CD8-positive, alpha-beta T cell (primary cell): ENCODE measurements at regions of chr17 and their contacts with region 1.

Region 1: DNA sequence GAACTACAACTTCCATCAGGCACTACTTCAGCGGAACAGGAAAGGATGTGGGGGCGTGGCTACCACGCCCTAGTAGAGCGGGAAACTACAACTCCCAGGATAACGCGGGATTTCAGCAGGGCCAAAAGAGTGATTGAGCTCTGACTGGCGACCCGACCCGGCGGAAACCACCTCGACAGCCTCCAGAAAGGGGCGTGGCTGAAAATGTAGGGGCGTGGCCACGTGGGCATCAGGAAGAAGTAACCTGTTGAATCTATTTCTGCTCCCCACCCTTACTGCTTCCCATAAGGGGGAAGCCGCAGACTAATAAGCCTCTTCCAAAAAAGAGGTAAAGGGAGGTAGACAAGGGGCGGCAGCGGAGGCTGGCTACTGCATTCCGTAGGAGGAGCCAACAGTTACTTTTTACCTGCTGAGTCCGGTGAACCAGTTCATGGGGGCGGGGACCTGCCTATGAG is at the start of gene TMEM102:
- DNase-seq: peak; percentile 96 to 99 (median 98)
- ATAC-seq: peak; percentile 81
- H3K4me3 ChIP-seq: peak within 1 kb of the TSS; percentile 70 to 82
- H3K4me3 Mint-ChIP-seq: peak within 1 kb of the TSS; percentile 92
- H3K27ac ChIP-seq: peak within 1 kb of the TSS; percentile 66 to 90
- H3K27ac Mint-ChIP-seq: peak within 1 kb of the TSS; percentile 95
- H3K4me1 ChIP-seq: peaks cover 38% of the 10 kb centered on the region
- H3K4me1 Mint-ChIP-seq: peaks cover 38% of the 10 kb centered on the region
- H3K27me3 ChIP-seq: peaks cover 0 to 4% of the 10 kb centered on the region in 2 experiments
- H3K27me3 Mint-ChIP-seq: peaks cover 12% of the 10 kb centered on the region
- CTCF ChIP-seq: no peak
- total RNA-seq, gene TMEM102: 13.2 to 15.3 TPM

Region 2: GRCh38 chr17:7252176-7253043 is 182.8 kb before region 1 on chr17 and contains the start of gene ELP5:
- CTCF ChIA-PET with region 1: no interaction called
- POLR2A ChIA-PET with region 1: no interaction called
- intact Hi-C with region 1: loop called in 1 of 2 experiments (anchors 1 kb)
- DNase-seq: peak; percentile 73 to 99 (median 87)
- ATAC-seq: peak; percentile 48
- H3K4me3 ChIP-seq: peak within 1 kb of the TSS; percentile 81 to 92
- H3K4me3 Mint-ChIP-seq: peak within 1 kb of the TSS; percentile 97
- H3K27ac ChIP-seq: peak within 1 kb of the TSS; percentile 99
- H3K27ac Mint-ChIP-seq: peak within 1 kb of the TSS; percentile 100
- H3K4me1 ChIP-seq: peaks cover 31% of the 10 kb centered on the region
- H3K4me1 Mint-ChIP-seq: peaks cover 44% of the 10 kb centered on the region
- H3K27me3 ChIP-seq: no peaks in the 10 kb centered on the region
- H3K27me3 Mint-ChIP-seq: no peaks in the 10 kb centered on the region
- CTCF ChIP-seq: no peak
- total RNA-seq, gene ELP5: 38.9 to 39.0 TPM

Region 3: GRCh38 chr17:7336240-7337175 is 98.7 kb before region 1 on chr17 and contains the start of gene ACAP1:
- CTCF ChIA-PET with region 1: interaction called, 18 read pairs
- POLR2A ChIA-PET with region 1: interaction called, 10 read pairs
- intact Hi-C with region 1: no loop called
- DNase-seq: peak; percentile 72 to 93 (median 89)
- ATAC-seq: peak; percentile 98
- H3K4me3 ChIP-seq: peak within 1 kb of the TSS; percentile 74 to 76
- H3K4me3 Mint-ChIP-seq: peak within 1 kb of the TSS; percentile 94
- H3K27ac ChIP-seq: peak within 1 kb of the TSS; percentile 60 to 65
- H3K27ac Mint-ChIP-seq: peak within 1 kb of the TSS; percentile 97
- H3K4me1 ChIP-seq: peaks cover 55% of the 10 kb centered on the region
- H3K4me1 Mint-ChIP-seq: peaks cover 61% of the 10 kb centered on the region
- H3K27me3 ChIP-seq: no peaks in the 10 kb centered on the region
- H3K27me3 Mint-ChIP-seq: no peaks in the 10 kb centered on the region
- CTCF ChIP-seq: no peak
- total RNA-seq, gene ACAP1: 432 to 451 TPM

Region 4: DNA sequence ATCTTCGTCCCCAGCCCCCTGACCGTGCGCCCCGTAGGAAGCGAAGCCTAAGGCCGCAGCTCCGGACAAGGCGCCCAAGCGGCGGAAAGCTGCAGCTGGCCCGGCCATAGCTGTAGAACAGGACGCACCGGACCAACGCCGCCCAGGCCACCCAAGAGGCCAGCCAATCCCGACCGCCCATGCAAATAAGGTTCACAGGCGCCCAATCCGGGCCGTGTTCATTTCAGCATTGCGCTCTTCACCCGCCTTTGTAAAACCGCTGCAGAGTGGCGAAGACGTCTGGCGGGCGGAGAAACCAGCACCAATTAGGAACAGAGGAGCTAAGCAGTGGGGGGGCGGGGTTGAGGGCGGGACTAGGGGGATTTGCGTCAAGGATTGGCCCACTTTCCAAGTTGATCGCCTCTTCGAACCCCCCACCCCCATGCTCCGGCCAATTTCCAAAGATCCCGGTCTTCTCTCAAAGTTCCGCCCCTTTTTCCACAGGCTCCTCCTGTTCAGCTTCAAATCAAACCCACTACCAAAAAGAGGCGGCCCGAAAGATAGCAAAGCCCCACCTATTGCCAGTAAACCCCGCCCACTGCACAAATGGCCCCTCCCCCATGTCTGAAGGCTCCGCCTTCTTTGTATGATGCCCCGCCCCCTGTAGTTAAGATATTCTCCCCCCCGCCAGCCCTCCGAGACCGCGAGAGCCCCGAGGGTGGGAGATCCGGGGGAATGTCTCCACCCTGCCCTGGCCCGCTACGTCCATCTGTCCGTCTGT is 31.1 kb before region 1 on chr17 and contains the start of gene TMEM256:
- CTCF ChIA-PET with region 1: interaction called, 24 read pairs
- POLR2A ChIA-PET with region 1: interaction called, 20 read pairs
- intact Hi-C with region 1: loop called (anchors 1 kb)
- DNase-seq: peak; percentile 90 to 99 (median 94)
- ATAC-seq: peak; percentile 83
- H3K4me3 ChIP-seq: peak within 1 kb of the TSS; percentile 75 to 83
- H3K4me3 Mint-ChIP-seq: peak within 1 kb of the TSS; percentile 95
- H3K27ac ChIP-seq: peak within 1 kb of the TSS; percentile 61 to 81
- H3K27ac Mint-ChIP-seq: peak within 1 kb of the TSS; percentile 96
- H3K4me1 ChIP-seq: peaks cover 24% of the 10 kb centered on the region
- H3K4me1 Mint-ChIP-seq: peaks cover 31% of the 10 kb centered on the region
- H3K27me3 ChIP-seq: no peaks in the 10 kb centered on the region
- H3K27me3 Mint-ChIP-seq: no peaks in the 10 kb centered on the region
- CTCF ChIP-seq: no peak
- total RNA-seq, gene TMEM256: 27.1 to 29.1 TPM

Region 5: DNA sequence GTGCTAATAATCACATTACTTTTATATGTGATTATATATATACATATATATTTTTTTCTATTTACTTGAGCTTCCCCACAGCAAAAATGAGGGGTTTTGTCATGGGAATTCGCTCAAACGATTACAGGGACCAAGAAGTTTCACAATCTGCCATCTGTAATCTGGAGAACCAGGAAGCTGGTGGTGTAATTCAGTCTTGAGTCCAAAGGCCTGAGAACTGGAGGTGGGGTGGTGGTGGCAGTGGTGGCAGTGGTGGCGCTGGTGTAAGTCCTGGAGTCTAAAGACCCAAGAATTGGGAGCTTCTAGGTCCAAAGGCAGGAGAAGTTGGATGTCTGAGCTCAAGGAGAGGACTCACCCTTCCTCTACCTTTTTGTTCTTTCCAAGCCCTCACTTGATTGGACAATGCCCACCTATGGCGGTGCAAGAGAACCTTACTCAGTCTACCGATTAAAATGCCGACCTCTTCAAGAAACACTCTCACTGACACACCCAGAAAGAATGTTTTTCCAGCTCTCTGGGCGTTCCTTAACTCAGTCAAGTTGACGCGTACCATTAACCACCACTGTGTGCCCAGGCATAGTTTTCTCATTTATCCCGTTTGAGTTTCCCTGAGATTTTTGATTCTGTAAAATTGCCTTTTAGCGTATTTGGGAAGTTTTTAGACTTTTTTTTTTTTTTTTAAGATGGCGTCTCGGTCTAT is 80.8 kb after region 1 on chr17:
- CTCF ChIA-PET with region 1: interaction called, 47 read pairs
- POLR2A ChIA-PET with region 1: interaction called, 3 read pairs
- intact Hi-C with region 1: no loop called
- DNase-seq: no peak
- ATAC-seq: no peak
- H3K4me3 ChIP-seq: no peak overlapping the region
- H3K4me3 Mint-ChIP-seq: no peak overlapping the region
- H3K27ac ChIP-seq: no peak overlapping the region
- H3K27ac Mint-ChIP-seq: no peak overlapping the region
- H3K4me1 ChIP-seq: no peaks in the 10 kb centered on the region
- H3K4me1 Mint-ChIP-seq: peaks cover 2% of the 10 kb centered on the region
- H3K27me3 ChIP-seq: no peaks in the 10 kb centered on the region
- H3K27me3 Mint-ChIP-seq: no peaks in the 10 kb centered on the region
- CTCF ChIP-seq: no peak

Region 6: DNA sequence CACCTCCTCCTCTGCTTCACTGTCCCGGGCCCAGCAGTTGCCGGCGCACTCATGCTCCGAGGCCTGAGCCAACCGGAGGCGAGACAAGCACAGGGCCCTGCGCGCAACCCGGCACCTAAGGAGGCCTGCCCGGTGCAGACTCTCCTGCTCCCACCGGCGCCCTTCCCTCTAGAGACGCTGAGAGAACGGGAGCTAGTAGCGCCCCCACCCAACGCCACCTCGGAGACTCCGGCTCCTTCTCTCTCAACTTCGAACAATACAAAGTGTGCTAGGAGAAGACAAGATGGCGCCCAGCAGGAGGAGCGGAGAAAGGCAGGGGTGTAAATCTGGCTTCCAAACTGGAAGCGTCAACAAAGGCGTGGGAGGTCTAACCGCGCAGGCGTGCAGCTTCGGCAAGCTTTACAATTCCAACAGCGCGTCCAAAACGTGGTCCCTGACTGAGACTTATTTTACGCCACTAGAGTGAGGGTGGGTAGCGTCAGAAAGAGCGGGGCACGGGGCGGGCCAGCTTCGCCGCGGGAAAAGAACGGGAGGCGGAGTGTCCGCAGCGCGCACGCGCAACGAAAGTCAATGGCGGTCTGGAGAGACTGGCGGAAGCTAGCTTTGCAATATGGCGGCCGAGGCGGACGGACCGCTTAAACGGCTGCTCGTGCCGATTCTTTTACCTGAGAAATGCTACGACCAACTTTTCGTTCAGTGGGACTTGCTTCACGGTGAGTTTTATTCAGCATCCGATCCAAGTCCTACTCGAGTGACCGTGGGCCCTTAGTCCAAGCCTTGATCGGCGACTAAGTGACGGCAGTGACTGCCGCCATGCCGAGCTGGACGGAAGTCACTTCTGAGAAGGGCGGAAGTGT is 148.2 kb after region 1 on chr17 and contains the start of gene MPDU1:
- CTCF ChIA-PET with region 1: interaction called, 12 read pairs
- POLR2A ChIA-PET with region 1: interaction called, 6 read pairs
- intact Hi-C with region 1: loop called in 1 of 2 experiments (anchors 1 kb)
- DNase-seq: peak; percentile 85 to 98 (median 94)
- ATAC-seq: peak; percentile 83
- H3K4me3 ChIP-seq: peak within 1 kb of the TSS; percentile 90 to 93
- H3K4me3 Mint-ChIP-seq: peak within 1 kb of the TSS; percentile 100
- H3K27ac ChIP-seq: peak within 1 kb of the TSS; percentile 92 to 99
- H3K27ac Mint-ChIP-seq: peak within 1 kb of the TSS; percentile 100
- H3K4me1 ChIP-seq: peaks cover 40% of the 10 kb centered on the region
- H3K4me1 Mint-ChIP-seq: peaks cover 47% of the 10 kb centered on the region
- H3K27me3 ChIP-seq: no peaks in the 10 kb centered on the region
- H3K27me3 Mint-ChIP-seq: no peaks in the 10 kb centered on the region
- CTCF ChIP-seq: no peak
- total RNA-seq, gene MPDU1: 16.6 to 17.2 TPM

Region 7: GRCh38 chr17:8393420-8394241 is 958.4 kb after region 1 on chr17:
- CTCF ChIA-PET with region 1: no interaction called
- POLR2A ChIA-PET with region 1: no interaction called
- intact Hi-C with region 1: no loop called
- DNase-seq: peak in 8 of 9 experiments; percentile 15 to 89 (median 55)
- ATAC-seq: peak; percentile 99
- H3K4me3 ChIP-seq: no peak overlapping the region
- H3K4me3 Mint-ChIP-seq: peak overlapping the region; percentile 43
- H3K27ac ChIP-seq: peak overlapping the region; percentile 35 to 75
- H3K27ac Mint-ChIP-seq: peak overlapping the region; percentile 94
- H3K4me1 ChIP-seq: peaks cover 14% of the 10 kb centered on the region
- H3K4me1 Mint-ChIP-seq: peaks cover 15% of the 10 kb centered on the region
- H3K27me3 ChIP-seq: peaks cover 0 to 3% of the 10 kb centered on the region in 2 experiments
- H3K27me3 Mint-ChIP-seq: peaks cover 6% of the 10 kb centered on the region
- CTCF ChIP-seq: no peak